Gastrocnemius medialis (tissue), 4 donors: ENCODE measurements at regions of chr14 and their contacts with region 1.

Region 1: GRCh38 chr14:89416002-89416995 is 734 bp downstream of the FOXN3 start:
- DNase-seq: peak; percentile 98 to 100
- ATAC-seq: peak; percentile 74 to 80
- H3K4me3 ChIP-seq: peak overlapping the region; percentile 77 to 100 (median 95)
- H3K27ac ChIP-seq: peak overlapping the region; percentile 95 to 100 (median 99)
- H3K4me1 ChIP-seq: peaks cover 19 to 22% of the 10 kb centered on the region in 2 donors
- H3K27me3 ChIP-seq: no peaks in the 10 kb centered on the region
- CTCF ChIP-seq: peak in 1 of 5 experiments; percentile 21
- POLR2A ChIP-seq: peak; percentile 77 to 97

Region 2: DNA sequence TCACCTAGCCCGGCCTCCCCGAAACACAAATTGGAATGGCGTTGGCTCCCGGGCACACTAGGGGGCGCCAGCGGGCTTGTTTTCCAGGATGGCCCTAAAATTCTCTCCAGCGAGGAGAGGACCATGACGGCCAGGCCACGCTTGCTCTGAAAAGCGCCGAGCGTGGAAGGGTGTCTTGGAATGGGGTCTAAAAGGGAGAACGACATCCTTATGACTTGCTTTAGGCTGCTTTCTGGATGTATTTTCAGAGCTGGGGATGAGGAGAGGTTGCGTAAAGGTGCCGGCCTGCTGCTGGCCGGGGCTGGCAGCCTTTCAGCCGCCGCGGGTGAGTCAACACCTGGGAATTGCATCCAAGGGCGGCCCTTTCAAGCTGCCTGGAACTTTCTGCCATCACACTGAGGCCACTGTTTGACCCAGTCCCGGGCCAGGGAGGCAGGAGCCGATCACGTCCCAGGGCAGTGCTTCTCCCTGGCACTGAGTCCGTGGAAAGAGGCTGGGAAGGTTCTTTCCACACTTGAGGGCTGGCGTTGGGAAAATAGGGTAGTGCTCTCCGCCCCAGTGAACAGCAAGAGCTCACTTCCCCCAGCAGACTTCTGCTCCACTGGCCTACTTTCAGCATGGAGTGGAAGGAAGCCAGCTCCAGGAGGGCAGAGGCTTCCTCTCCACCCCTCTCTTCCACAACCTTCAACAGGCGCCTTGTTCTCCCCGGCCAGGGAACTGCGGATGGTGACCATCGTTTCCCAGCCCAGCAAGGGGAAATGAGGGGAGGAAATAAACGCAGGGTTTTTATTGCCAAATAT is 375.6 kb before region 1 on chr14:
- in situ Hi-C with region 1: loop called in 2 of 4 experiments (anchors 25 kb)
- intact Hi-C with region 1: loop called (anchors 2 kb)
- DNase-seq: peak; percentile 88 to 94
- ATAC-seq: peak; percentile 96 to 97
- H3K4me3 ChIP-seq: peak overlapping the region; percentile 38 to 72 (median 50)
- H3K27ac ChIP-seq: peak overlapping the region; percentile 77 to 89 (median 84)
- H3K4me1 ChIP-seq: peaks cover 9 to 21% of the 10 kb centered on the region in 2 donors
- H3K27me3 ChIP-seq: no peaks in the 10 kb centered on the region
- CTCF ChIP-seq: peak; percentile 91 to 97 (median 96)
- POLR2A ChIP-seq: no peak

Region 3: DNA sequence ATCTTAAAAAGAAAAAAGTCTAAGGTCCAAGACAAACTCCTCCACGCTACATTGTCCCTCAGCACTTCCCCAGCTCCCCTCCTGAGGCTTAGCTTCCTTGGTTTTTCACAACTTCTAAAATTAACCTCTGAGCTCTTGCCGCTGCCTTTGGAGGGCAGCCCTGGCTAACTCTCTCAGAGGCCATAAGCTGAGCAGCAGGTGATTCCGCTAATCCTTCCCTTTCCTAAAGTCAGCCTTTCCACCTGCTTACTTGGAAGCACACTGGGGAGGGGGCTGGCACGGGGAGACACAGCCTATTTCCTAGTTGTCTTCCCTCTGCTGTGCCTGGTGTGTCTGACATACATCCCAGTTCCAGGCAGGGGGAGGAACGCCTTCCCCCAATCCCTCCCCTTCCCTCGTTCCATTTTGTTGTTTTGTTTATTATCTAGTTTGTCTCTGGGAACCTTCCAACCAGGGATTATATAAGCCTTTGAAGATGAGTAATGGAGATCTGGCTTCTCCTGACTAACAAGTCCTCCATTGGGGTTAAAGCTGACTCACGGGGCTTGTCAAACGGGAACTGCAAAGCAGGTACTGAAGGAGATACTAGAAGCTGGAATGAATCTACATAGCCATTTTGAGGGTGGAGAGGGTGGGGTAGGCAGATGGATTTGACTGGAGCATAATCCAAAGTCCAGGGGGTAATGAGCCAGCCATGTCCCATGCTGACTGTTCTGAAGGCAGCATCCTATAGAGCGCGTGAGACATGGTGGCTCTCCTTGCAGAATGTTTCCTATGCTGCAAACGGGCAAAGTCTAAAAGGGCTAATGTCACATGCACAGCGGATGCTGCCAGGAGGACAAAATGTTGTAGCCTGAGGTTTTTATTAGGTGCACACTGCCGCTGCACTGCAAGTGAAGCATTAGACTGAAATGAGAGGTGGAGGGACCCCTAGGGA is 230.1 kb before region 1 on chr14:
- in situ Hi-C with region 1: loop called in 1 of 4 experiments (anchors 10 kb)
- intact Hi-C with region 1: no loop called
- DNase-seq: peak; percentile 72 to 80
- ATAC-seq: peak; percentile 78 to 84
- H3K4me3 ChIP-seq: peak overlapping the region in 3 of 4 donors; percentile 30 to 36 (median 33)
- H3K27ac ChIP-seq: peak overlapping the region; percentile 89 to 93 (median 92)
- H3K4me1 ChIP-seq: peaks cover 51 to 54% of the 10 kb centered on the region in 2 donors
- H3K27me3 ChIP-seq: no peaks in the 10 kb centered on the region
- CTCF ChIP-seq: no peak
- POLR2A ChIP-seq: peak in 1 of 2 donors; percentile 33

Region 4: DNA sequence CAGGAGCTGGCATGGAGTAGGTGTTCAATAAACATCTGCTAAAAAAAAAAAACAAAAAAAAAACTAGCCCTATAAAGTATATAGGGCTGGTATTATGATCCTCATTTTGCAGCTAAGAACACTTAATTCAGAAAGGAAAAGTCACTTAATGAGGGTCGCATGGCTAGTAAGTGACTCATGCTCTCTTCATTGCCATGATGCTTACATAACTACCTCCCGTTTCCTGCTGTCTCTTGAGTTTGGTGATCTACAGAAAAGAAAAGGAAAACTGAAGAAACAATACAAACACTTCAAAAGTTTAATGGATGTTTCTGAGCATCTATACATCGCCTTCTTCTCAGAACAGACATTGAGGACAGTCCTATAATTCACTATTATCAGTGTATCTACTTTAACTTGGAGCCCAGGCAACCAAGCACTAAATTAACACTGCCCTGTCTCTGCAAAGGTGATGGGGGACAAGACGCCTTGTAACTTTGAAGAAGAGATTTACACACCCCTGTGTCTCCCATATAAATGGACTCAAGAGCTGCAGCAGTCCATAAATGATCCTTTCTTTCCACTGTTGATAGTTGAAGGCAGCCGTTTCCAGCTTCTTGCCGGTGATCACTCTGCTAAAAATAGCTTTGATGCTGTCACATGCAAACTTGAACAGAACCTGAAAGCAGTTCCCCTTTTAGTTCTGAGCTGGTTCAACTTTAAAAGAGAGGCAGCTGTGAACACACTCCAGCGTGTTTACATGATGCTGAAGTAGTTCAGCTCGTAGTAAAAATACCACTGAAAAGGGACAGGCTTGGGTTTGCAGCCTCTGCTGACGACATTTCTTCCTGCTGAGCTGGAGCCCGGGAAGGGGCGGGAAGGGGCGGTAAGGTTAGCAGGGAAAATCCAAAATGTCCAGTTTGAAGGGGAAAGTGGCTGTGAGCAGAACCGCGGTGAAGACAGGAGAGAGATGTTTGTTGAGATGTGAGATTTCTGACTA is 112.6 kb before region 1 on chr14:
- in situ Hi-C with region 1: no loop called
- intact Hi-C with region 1: loop called (anchors 1 kb)
- DNase-seq: peak; percentile 53 to 59
- ATAC-seq: peak; percentile 90 to 93
- H3K4me3 ChIP-seq: peak overlapping the region; percentile 38 to 42 (median 40)
- H3K27ac ChIP-seq: peak overlapping the region; percentile 90 to 95 (median 92)
- H3K4me1 ChIP-seq: peaks cover 66 to 77% of the 10 kb centered on the region in 2 donors
- H3K27me3 ChIP-seq: no peaks in the 10 kb centered on the region
- CTCF ChIP-seq: no peak
- POLR2A ChIP-seq: peak; percentile 46 to 73

Region 5: GRCh38 chr14:89386212-89386886 is 29.9 kb before region 1 on chr14:
- in situ Hi-C with region 1: no loop called
- intact Hi-C with region 1: loop called (anchors 2 kb)
- DNase-seq: peak; percentile 58 to 86
- ATAC-seq: peak; percentile 77 to 82
- H3K4me3 ChIP-seq: peak overlapping the region in 2 of 4 donors; percentile 1 to 3
- H3K27ac ChIP-seq: peak overlapping the region; percentile 78 to 84 (median 84)
- H3K4me1 ChIP-seq: peaks cover 60 to 71% of the 10 kb centered on the region in 2 donors
- H3K27me3 ChIP-seq: no peaks in the 10 kb centered on the region
- CTCF ChIP-seq: no peak
- POLR2A ChIP-seq: no peak

Region 6: DNA sequence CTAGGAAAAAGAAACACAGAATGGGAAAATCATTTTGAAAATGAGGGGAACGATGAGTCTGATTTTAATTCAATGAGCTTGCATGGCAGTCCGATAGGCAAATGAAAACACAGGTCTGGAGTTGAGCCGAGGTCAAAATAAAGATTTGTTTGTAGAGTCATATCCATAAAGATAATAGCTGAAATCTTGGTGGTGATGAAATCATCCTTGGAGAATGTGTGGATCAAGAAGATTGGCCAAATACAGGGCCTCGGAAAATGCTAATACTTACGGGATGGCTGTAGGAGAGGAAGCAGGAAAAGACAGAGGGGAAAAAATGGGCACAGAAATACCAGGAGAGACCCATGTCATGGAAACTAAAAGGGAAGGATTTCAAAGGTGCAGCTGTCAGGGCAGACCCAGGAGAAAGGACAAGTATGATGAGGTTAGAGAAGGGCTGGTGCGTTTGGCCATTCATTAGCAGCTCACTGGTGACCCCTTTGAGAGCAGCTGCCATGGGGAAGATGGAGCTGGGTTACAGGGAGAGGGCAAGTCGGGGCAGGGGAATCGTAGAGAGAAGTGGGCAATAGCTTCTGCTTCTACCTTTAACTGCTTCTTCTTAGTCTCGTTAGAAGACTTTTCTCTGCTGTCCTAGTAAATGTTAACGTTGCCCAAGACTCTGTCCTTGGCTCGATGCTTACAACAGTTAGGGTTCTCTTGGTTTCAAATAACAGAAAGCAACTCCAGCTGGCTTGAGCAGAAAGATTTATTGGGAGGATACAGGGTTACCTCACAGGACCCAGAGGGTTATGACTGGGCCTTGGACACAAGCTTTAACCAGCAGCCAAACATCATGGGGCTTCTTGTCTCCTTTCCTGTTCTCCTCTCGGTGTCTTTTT is 376.4 kb after region 1 on chr14:
- in situ Hi-C with region 1: no loop called
- intact Hi-C with region 1: loop called (anchors 10 kb)
- DNase-seq: peak; percentile 87 to 88
- ATAC-seq: peak; percentile 98 to 99
- H3K4me3 ChIP-seq: peak overlapping the region in 1 of 4 donors; percentile 29
- H3K27ac ChIP-seq: peak overlapping the region; percentile 81 to 91 (median 89)
- H3K4me1 ChIP-seq: peaks cover 18 to 26% of the 10 kb centered on the region in 2 donors
- H3K27me3 ChIP-seq: no peaks in the 10 kb centered on the region
- CTCF ChIP-seq: no peak
- POLR2A ChIP-seq: no peak